ENCODE measurements at regions of chr17 and their contacts with region 1.

Region 1: GRCh38 chr17:59498530-59499307 is 66.7 kb upstream of the DHX40 start:
- DNase-seq: no peak
- ATAC-seq: no peak
- H3K4me3 ChIP-seq: no peak overlapping the region
- H3K27ac ChIP-seq: no peak overlapping the region
- H3K4me1 ChIP-seq: no peaks in the 10 kb centered on the region
- H3K27me3 ChIP-seq: no peaks in the 10 kb centered on the region
- CTCF ChIP-seq: no peak

Region 2: GRCh38 chr17:59185997-59186396 is 312.7 kb before region 1 on chr17:
- CTCF ChIA-PET with region 1: no interaction called
- POLR2A ChIA-PET with region 1: interaction called, 12 read pairs
- in situ Hi-C with region 1: no loop called
- intact Hi-C with region 1: no loop called
- DNase-seq: no peak
- ATAC-seq: no peak
- H3K4me3 ChIP-seq: no peak overlapping the region
- H3K27ac ChIP-seq: no peak overlapping the region
- H3K4me1 ChIP-seq: no peaks in the 10 kb centered on the region
- H3K27me3 ChIP-seq: no peaks in the 10 kb centered on the region
- CTCF ChIP-seq: no peak

Region 3: GRCh38 chr17:59466946-59467801 is 31.5 kb before region 1 on chr17:
- CTCF ChIA-PET with region 1: no interaction called
- POLR2A ChIA-PET with region 1: no interaction called
- in situ Hi-C with region 1: no loop called
- intact Hi-C with region 1: no loop called
- DNase-seq: no peak
- ATAC-seq: no peak
- H3K4me3 ChIP-seq: no peak overlapping the region
- H3K27ac ChIP-seq: no peak overlapping the region
- H3K4me1 ChIP-seq: no peaks in the 10 kb centered on the region
- H3K27me3 ChIP-seq: no peaks in the 10 kb centered on the region
- CTCF ChIP-seq: no peak

Measured in Panc1 (cell line).